Mammary epithelial cell (primary cell): ENCODE measurements at regions of chr1 and their contacts with region 1.

Region 1: DNA sequence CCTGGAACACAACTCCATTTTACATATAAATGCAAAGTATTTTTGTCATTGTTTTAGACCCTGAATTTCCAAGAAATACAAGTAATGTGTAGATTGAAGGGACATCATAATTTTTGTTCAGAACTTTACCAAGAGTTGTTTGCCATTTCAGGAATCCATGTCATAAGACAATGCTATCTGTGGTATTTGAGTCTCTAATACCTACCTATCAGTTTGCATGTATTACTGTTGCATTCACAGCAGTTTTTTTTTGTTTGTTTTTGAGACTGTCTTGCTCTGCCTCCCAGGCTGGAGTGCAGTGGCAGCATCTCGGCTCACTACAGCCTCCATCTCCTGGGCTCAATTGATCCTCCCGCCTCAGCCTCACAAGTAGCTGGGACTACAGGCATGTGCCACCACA is 17.1 kb downstream of the MPZ start:
- DNase-seq: no peak
- H3K4me3 ChIP-seq: no peak overlapping the region
- H3K27ac ChIP-seq: no peak overlapping the region
- H3K4me1 ChIP-seq: no peaks in the 10 kb centered on the region
- H3K27me3 ChIP-seq: no peaks in the 10 kb centered on the region
- CTCF ChIP-seq: no peak

Region 2: DNA sequence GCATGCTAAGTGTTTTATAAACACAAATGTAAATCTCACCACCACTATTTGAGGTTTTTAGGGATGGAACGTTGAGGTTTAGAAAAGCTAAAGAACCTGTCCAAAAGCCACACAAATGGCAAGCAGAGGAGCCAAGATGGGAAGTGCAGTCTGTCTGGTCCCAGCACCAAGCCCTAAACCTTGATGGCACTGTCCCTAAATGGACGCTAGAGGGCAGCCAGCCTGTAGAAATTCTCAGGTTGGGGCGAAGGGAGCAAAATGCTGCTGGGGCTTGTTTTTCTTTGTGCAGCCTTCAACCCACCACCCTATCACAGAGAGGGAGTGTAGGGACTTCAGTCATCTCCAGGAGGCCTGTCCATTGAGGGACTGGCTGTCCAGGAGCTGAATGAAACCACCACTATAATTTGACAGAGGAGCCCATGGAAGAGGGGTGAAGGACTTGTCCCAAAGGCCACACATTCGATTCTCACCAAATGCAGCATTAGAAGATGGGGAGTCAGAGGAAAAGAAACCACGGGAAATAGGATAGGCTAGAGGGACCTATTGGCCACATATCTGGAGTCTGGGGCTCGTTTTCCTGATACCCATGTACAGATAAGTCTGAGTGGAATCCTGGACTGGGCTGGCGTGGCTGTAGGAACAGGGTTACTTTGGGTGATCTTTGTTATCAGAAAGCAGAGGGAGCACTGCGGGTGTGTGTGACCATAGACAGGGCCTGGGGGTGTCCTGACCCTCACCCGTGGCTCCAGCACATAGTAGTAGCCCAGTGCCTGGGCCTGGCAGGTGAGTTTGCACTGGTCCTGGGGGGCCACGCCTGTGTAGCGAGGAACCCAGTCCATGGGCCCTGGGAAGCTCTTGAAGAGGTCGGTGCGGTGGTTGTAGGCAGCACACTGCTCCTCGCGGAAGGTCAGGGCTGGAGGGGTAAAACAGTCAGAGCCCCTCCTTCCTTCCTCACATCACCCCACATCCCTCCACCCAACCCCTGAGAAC is 99.9 kb before region 1 on chr1:
- CTCF ChIA-PET with region 1: no interaction called
- dilution Hi-C with region 1: no loop called
- in situ Hi-C with region 1: no loop called
- intact Hi-C with region 1: loop called (anchors 5 kb)
- DNase-seq: peak; percentile 48
- H3K4me3 ChIP-seq: no peak overlapping the region
- H3K27ac ChIP-seq: no peak overlapping the region
- H3K4me1 ChIP-seq: peaks cover 1% of the 10 kb centered on the region
- H3K27me3 ChIP-seq: no peaks in the 10 kb centered on the region
- CTCF ChIP-seq: peak; percentile 91 to 94

Region 3: GRCh38 chr1:161209790-161210409 is 82.7 kb before region 1 on chr1:
- CTCF ChIA-PET with region 1: no interaction called
- dilution Hi-C with region 1: no loop called
- in situ Hi-C with region 1: no loop called
- intact Hi-C with region 1: loop called (anchors 1 kb)
- DNase-seq: peak; percentile 70
- H3K4me3 ChIP-seq: no peak overlapping the region
- H3K27ac ChIP-seq: no peak overlapping the region
- H3K4me1 ChIP-seq: no peaks in the 10 kb centered on the region
- H3K27me3 ChIP-seq: no peaks in the 10 kb centered on the region
- CTCF ChIP-seq: peak; percentile 91 to 96

Region 4: GRCh38 chr1:161216945-161217712 is 75.5 kb before region 1 on chr1:
- CTCF ChIA-PET with region 1: interaction called, 15 read pairs
- dilution Hi-C with region 1: no loop called
- in situ Hi-C with region 1: no loop called
- intact Hi-C with region 1: no loop called
- DNase-seq: no peak
- H3K4me3 ChIP-seq: no peak overlapping the region
- H3K27ac ChIP-seq: no peak overlapping the region
- H3K4me1 ChIP-seq: no peaks in the 10 kb centered on the region
- H3K27me3 ChIP-seq: no peaks in the 10 kb centered on the region
- CTCF ChIP-seq: no peak